Mammary epithelial cell (primary cell): ENCODE measurements at regions of chr1 and their contacts with region 1.

Region 1: GRCh38 chr1:206489980-206490770 is 17.2 kb upstream of the RASSF5 start:
- DNase-seq: peak; percentile 47
- H3K4me3 ChIP-seq: no peak overlapping the region
- H3K27ac ChIP-seq: no peak overlapping the region
- H3K4me1 ChIP-seq: no peaks in the 10 kb centered on the region
- H3K27me3 ChIP-seq: no peaks in the 10 kb centered on the region
- CTCF ChIP-seq: peak; percentile 94 to 100

Region 2: DNA sequence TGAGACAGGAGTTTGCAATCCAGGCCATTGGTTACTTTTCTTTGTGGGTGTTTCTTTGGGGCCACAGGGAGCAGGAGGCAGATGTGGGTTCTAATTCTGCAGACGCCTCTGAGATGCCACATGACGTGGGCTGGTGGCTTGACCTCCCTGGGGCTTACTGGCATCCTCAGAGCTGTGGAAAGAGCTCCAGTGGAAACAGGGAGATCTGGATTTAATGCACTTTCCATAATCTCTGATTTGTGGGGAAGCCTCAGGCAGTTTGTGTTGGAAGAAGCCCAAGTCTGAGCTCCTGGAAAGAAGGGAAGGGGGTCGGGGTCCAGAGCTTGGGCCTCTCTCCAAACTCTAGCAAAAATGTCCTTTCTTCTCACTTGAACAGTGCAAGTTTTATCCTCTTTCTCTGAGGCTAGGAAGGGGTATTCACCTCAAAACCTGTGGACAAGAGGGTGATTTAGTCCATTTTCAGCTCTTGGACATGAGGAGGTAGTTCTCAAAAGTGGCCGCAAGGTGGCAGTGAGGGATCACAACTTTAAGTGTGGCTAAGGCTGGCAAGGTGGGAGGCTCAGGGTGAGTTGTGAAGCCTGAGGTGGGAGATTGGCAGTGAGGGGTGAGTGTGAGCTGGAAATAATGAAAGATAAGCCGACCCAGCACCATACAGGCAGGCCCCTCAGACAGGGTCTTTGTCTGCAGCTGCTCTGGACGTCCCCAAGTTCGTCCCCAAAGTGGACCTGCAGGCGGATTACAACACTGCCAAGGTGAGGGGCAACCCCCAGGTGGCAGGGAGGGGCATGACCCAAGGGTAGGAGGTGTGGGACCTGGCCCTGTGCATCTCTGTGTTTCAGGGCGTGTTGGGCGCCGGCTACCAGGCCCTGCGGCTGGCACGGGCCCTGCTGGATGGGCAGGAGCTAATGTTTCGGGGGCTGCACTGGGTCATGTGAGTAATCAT is 10.7 kb before region 1 on chr1:
- CTCF ChIA-PET with region 1: interaction called, 10 read pairs
- dilution Hi-C with region 1: no loop called
- in situ Hi-C with region 1: no loop called
- intact Hi-C with region 1: no loop called
- DNase-seq: peak; percentile 49
- H3K4me3 ChIP-seq: no peak overlapping the region
- H3K27ac ChIP-seq: no peak overlapping the region
- H3K4me1 ChIP-seq: peaks cover 21% of the 10 kb centered on the region
- H3K27me3 ChIP-seq: no peaks in the 10 kb centered on the region
- CTCF ChIP-seq: peak; percentile 75 to 84

Region 3: GRCh38 chr1:206583707-206584648 is 93.8 kb after region 1 on chr1:
- CTCF ChIA-PET with region 1: interaction called, 7 read pairs
- dilution Hi-C with region 1: loop called (anchors 5 kb)
- in situ Hi-C with region 1: loop called in 1 of 2 experiments (anchors 5 kb)
- intact Hi-C with region 1: loop called (anchors 1 kb)
- DNase-seq: peak; percentile 48
- H3K4me3 ChIP-seq: no peak overlapping the region
- H3K27ac ChIP-seq: no peak overlapping the region
- H3K4me1 ChIP-seq: peaks cover 24% of the 10 kb centered on the region
- H3K27me3 ChIP-seq: no peaks in the 10 kb centered on the region
- CTCF ChIP-seq: peak; percentile 94

Region 4: GRCh38 chr1:206635080-206635977 is 145.2 kb after region 1 on chr1 and contains the start of gene DYRK3:
- CTCF ChIA-PET with region 1: no interaction called
- dilution Hi-C with region 1: no loop called
- in situ Hi-C with region 1: no loop called
- intact Hi-C with region 1: loop called (anchors 1 kb)
- DNase-seq: peak; percentile 94
- H3K4me3 ChIP-seq: peak within 1 kb of the TSS; percentile 86 to 95 (median 88)
- H3K27ac ChIP-seq: peak within 1 kb of the TSS; percentile 98
- H3K4me1 ChIP-seq: peaks cover 30% of the 10 kb centered on the region
- H3K27me3 ChIP-seq: no peaks in the 10 kb centered on the region
- CTCF ChIP-seq: peak in 1 of 2 donors; percentile 26
- total RNA-seq, gene DYRK3: 23.2 to 35.3 TPM

Region 5: GRCh38 chr1:206808615-206809014 is 318.4 kb after region 1 on chr1:
- CTCF ChIA-PET with region 1: no interaction called
- dilution Hi-C with region 1: no loop called
- in situ Hi-C with region 1: no loop called
- intact Hi-C with region 1: loop called (anchors 2 kb)
- DNase-seq: no peak
- H3K4me3 ChIP-seq: no peak overlapping the region
- H3K27ac ChIP-seq: no peak overlapping the region
- H3K4me1 ChIP-seq: peaks cover 7% of the 10 kb centered on the region
- H3K27me3 ChIP-seq: no peaks in the 10 kb centered on the region
- CTCF ChIP-seq: peak; percentile 15 to 52